ENCODE measurements at regions of chr9 and their contacts with region 1.

Region 1: GRCh38 chr9:136118320-136119060 is at the start of gene TMEM250:
- DNase-seq: peak; percentile 96
- ATAC-seq: peak; percentile 90
- H3K4me3 Mint-ChIP-seq: peak within 1 kb of the TSS; percentile 88
- H3K27ac Mint-ChIP-seq: peak within 1 kb of the TSS; percentile 92
- H3K4me1 Mint-ChIP-seq: peaks cover 20% of the 10 kb centered on the region
- H3K27me3 Mint-ChIP-seq: no peaks in the 10 kb centered on the region
- CTCF ChIP-seq: peak; percentile 12
- total RNA-seq, gene TMEM250: 24.4 to 25.9 TPM

Region 2: DNA sequence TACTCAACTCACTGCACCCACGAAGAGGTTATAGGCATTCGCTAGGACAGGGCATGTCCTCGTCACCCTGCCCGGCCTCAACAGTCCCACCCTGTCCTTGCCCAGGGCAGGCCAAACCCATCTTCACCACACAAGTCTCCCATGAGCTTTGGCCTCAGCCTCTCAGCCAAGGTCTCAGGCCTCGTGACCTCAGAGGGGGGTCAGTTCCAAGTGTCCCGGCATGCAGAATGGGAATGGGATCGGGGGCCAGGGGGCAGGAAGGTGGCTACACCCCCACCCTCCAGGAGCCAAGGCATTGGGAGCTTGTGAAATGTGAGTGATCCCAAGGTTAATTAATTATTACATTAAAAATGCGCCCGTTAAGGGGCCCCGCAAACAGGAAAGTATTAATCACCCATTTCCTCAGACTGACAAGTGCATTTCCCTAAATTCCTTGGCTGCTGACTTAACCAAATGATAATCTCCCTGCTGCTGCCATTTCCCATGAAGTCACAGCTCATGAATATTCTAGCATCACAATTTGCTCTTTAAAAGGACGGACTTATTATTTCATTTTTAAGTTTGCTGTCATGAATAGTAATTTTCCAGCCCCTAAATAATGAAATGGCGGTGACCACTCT is 149.3 kb before region 1 on chr9:
- CTCF ChIA-PET with region 1: interaction called, 54 read pairs
- POLR2A ChIA-PET with region 1: interaction called, 5 read pairs
- intact Hi-C with region 1: loop called (anchors 5 kb)
- DNase-seq: no peak
- ATAC-seq: no peak
- H3K4me3 Mint-ChIP-seq: no peak overlapping the region
- H3K27ac Mint-ChIP-seq: no peak overlapping the region
- H3K4me1 Mint-ChIP-seq: peaks cover 15% of the 10 kb centered on the region
- H3K27me3 Mint-ChIP-seq: peaks cover 2% of the 10 kb centered on the region
- CTCF ChIP-seq: no peak

Region 3: GRCh38 chr9:136002881-136003280 is 115.6 kb before region 1 on chr9:
- CTCF ChIA-PET with region 1: no interaction called
- POLR2A ChIA-PET with region 1: no interaction called
- intact Hi-C with region 1: no loop called
- DNase-seq: no peak
- ATAC-seq: no peak
- H3K4me3 Mint-ChIP-seq: no peak overlapping the region
- H3K27ac Mint-ChIP-seq: no peak overlapping the region
- H3K4me1 Mint-ChIP-seq: no peaks in the 10 kb centered on the region
- H3K27me3 Mint-ChIP-seq: no peaks in the 10 kb centered on the region
- CTCF ChIP-seq: no peak

Region 4: DNA sequence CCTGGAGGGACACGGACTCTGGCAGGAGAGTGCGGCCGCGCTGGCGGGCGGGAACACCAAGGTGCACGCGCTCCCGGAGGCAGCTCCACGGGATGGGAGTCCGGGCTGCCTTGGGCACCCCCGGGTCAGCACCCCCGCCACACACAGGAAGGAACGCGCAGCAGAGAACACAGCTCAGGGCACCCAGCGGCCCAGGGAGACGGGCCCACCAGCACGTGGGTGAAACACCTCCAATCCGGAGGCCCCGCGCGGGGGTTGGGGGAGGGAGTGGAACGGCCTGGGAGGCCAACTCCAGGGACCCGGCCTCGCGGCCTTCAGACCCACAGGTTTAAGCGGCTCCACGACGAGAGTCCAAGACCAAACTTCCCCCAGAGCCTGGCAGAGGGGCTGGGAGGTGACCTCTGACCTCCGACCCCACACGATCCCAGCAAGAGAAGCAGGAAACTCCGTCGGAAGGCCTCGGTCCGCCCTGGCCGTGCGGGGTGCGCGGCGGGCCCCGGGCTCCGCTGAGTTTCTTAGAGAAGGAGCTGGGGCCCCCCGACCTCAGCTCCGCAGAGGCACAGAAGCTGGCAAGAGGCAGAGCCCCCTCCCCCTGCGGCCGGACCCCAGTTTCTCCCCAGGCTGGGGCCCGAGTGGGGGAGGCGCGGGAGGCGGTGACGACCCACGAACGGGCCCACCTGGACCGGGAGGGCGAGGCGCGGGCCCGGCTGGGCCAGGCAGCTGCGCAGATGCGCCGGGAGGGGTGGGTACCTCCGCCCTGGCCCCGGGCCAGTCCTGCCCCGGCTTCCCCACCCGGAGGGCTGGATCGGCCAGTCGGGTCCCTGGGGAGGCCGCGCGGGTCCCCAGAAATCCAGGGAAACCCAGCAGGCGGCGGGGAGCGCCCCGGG is 24.3 kb before region 1 on chr9:
- CTCF ChIA-PET with region 1: interaction called, 54 read pairs
- POLR2A ChIA-PET with region 1: interaction called, 9 read pairs
- intact Hi-C with region 1: loop called (anchors 5 kb)
- DNase-seq: peak; percentile 83
- ATAC-seq: peak; percentile 75
- H3K4me3 Mint-ChIP-seq: peak overlapping the region; percentile 71
- H3K27ac Mint-ChIP-seq: peak overlapping the region; percentile 46
- H3K4me1 Mint-ChIP-seq: peaks cover 15% of the 10 kb centered on the region
- H3K27me3 Mint-ChIP-seq: no peaks in the 10 kb centered on the region
- CTCF ChIP-seq: no peak

Region 5: DNA sequence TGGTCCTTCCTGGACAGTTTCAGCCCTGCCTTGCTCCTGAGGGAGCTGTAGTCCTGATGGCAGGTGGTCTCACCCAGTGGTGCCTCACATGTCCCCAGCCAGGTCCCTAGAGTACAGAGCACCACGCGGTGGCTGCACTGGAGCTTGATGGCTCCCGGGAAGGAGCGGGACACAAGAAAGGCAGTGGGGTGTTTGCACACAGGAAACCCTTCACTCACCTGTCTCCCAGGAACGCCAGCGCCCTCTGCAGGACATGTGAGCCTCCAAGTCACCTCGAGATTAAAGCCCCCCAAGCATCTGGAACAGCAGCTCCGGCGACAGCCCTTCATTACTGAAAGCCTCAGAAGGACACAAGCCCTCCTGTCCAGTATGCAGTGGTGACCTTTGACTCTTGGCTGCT is 20.1 kb after region 1 on chr9:
- CTCF ChIA-PET with region 1: interaction called, 18 read pairs
- POLR2A ChIA-PET with region 1: no interaction called
- intact Hi-C with region 1: no loop called
- DNase-seq: peak; percentile 83
- ATAC-seq: no peak
- H3K4me3 Mint-ChIP-seq: no peak overlapping the region
- H3K27ac Mint-ChIP-seq: no peak overlapping the region
- H3K4me1 Mint-ChIP-seq: no peaks in the 10 kb centered on the region
- H3K27me3 Mint-ChIP-seq: peaks cover 17% of the 10 kb centered on the region
- CTCF ChIP-seq: peak; percentile 60

Region 6: GRCh38 chr9:136148766-136149165 is 30.3 kb after region 1 on chr9:
- CTCF ChIA-PET with region 1: no interaction called
- POLR2A ChIA-PET with region 1: no interaction called
- intact Hi-C with region 1: no loop called
- DNase-seq: no peak
- ATAC-seq: no peak
- H3K4me3 Mint-ChIP-seq: no peak overlapping the region
- H3K27ac Mint-ChIP-seq: no peak overlapping the region
- H3K4me1 Mint-ChIP-seq: no peaks in the 10 kb centered on the region
- H3K27me3 Mint-ChIP-seq: peaks cover 7% of the 10 kb centered on the region
- CTCF ChIP-seq: no peak

Measured in activated CD8-positive, alpha-beta T cell treated with anti-CD3 and anti-CD28 coated beads for 36 hours (primary cell).